ENCODE measurements at regions of chr17 and their contacts with region 1.

Region 1: GRCh38 chr17:50297407-50297865 is 23.2 kb downstream of the TMEM92 start:
- DNase-seq: peak; percentile 84
- H3K4me3 Mint-ChIP-seq: no peak overlapping the region
- H3K27ac Mint-ChIP-seq: no peak overlapping the region
- H3K4me1 Mint-ChIP-seq: peaks cover 6% of the 10 kb centered on the region
- H3K27me3 Mint-ChIP-seq: peaks cover 4% of the 10 kb centered on the region

Region 2: DNA sequence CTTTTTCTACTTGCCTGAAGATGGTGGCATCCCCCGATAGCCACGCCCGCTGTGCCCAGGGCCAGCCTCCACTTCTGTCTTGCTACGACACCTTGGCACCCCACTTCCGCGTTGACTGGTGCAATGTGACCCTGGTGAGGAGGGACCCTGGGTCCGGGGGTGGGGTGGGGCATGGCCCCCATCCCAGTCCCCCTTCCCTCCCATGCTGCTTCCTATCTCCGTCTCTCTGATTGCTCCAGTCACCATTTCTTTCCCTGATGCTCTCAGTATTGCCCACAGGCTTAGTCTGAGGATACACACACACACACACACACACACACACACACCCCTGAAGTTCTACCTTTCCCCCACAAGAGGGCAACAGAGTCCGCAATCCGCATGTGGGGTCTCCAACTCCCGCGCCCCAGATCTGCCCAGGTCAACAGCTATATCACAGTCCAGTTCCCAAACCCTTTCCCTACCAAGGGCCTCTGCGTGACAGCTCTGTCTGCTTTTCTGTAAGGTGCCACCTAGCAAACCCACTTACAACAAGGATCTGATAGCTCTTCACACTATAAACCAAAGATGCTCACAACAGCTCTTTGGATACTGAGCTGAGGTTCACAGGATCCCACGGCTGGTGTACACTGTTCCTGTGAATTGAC is 128.2 kb before region 1 on chr17:
- CTCF ChIA-PET with region 1: interaction called, 17 read pairs
- POLR2A ChIA-PET with region 1: no interaction called
- DNase-seq: peak; percentile 59
- H3K4me3 Mint-ChIP-seq: no peak overlapping the region
- H3K27ac Mint-ChIP-seq: peak overlapping the region; percentile 27
- H3K4me1 Mint-ChIP-seq: peaks cover 17% of the 10 kb centered on the region
- H3K27me3 Mint-ChIP-seq: no peaks in the 10 kb centered on the region

Region 3: GRCh38 chr17:50269477-50270434 is 27.7 kb before region 1 on chr17:
- CTCF ChIA-PET with region 1: interaction called, 17 read pairs
- POLR2A ChIA-PET with region 1: no interaction called
- DNase-seq: peak; percentile 79
- H3K4me3 Mint-ChIP-seq: no peak overlapping the region
- H3K27ac Mint-ChIP-seq: no peak overlapping the region
- H3K4me1 Mint-ChIP-seq: peaks cover 19% of the 10 kb centered on the region
- H3K27me3 Mint-ChIP-seq: peaks cover 21% of the 10 kb centered on the region

Region 4: DNA sequence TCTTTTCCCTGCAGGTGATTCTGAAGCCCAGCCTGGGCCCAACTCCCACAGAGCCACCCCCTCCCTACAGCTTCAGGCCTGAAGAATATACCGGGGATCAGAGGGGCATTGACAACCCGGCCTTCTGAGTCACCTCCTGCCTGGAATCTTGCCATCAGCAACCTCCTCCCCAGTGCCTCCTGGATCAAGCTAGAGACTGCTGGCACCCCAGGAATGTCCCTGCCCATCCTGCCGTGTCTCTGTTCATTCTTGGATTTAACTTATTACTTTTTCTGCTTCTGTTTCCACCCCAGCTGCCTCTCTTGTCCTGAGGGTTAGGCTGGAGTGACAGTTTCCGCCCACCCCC is 18.3 kb before region 1 on chr17:
- CTCF ChIA-PET with region 1: interaction called, 17 read pairs
- POLR2A ChIA-PET with region 1: no interaction called
- DNase-seq: no peak
- H3K4me3 Mint-ChIP-seq: no peak overlapping the region
- H3K27ac Mint-ChIP-seq: no peak overlapping the region
- H3K4me1 Mint-ChIP-seq: peaks cover 23% of the 10 kb centered on the region
- H3K27me3 Mint-ChIP-seq: peaks cover 26% of the 10 kb centered on the region